ENCODE measurements at regions of chr7 and their contacts with region 1.

Region 1: GRCh38 chr7:12328888-12329770 is 74.5 kb downstream of the VWDE start:
- DNase-seq: no peak
- H3K4me3 ChIP-seq: no peak overlapping the region
- H3K27ac ChIP-seq: no peak overlapping the region
- H3K4me1 ChIP-seq: no peaks in the 10 kb centered on the region
- H3K27me3 ChIP-seq: no peaks in the 10 kb centered on the region
- CTCF ChIP-seq: no peak
- EP300 ChIP-seq: no peak
- POLR2A ChIP-seq: no peak

Region 2: DNA sequence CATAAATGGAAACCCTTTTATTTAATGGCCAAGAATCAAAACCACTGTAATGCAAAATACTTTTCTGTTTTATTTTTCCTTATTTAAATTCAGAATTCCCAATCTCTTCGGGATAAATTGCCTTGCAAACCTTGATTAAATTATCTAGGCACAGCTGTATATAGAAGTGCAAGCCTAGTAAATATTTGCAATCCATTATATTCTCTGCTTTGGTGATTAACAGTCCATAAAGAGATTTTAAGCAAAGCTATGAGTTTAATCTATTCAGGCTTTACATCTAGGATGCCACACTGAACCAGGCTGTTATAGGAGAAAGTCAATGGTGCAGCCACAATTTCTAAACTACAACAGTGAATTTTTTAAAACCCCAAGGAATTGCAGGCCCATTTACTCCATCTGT is 453.5 kb before region 1 on chr7:
- intact Hi-C with region 1: no loop called
- DNase-seq: no peak
- H3K4me3 ChIP-seq: no peak overlapping the region
- H3K27ac ChIP-seq: no peak overlapping the region
- H3K4me1 ChIP-seq: no peaks in the 10 kb centered on the region
- H3K27me3 ChIP-seq: no peaks in the 10 kb centered on the region
- CTCF ChIP-seq: no peak
- EP300 ChIP-seq: no peak
- POLR2A ChIP-seq: no peak

Region 3: GRCh38 chr7:12052211-12052610 is 276.9 kb before region 1 on chr7:
- intact Hi-C with region 1: no loop called
- DNase-seq: no peak
- H3K4me3 ChIP-seq: no peak overlapping the region
- H3K27ac ChIP-seq: no peak overlapping the region
- H3K4me1 ChIP-seq: no peaks in the 10 kb centered on the region
- H3K27me3 ChIP-seq: no peaks in the 10 kb centered on the region
- CTCF ChIP-seq: no peak
- EP300 ChIP-seq: no peak
- POLR2A ChIP-seq: no peak

Region 4: DNA sequence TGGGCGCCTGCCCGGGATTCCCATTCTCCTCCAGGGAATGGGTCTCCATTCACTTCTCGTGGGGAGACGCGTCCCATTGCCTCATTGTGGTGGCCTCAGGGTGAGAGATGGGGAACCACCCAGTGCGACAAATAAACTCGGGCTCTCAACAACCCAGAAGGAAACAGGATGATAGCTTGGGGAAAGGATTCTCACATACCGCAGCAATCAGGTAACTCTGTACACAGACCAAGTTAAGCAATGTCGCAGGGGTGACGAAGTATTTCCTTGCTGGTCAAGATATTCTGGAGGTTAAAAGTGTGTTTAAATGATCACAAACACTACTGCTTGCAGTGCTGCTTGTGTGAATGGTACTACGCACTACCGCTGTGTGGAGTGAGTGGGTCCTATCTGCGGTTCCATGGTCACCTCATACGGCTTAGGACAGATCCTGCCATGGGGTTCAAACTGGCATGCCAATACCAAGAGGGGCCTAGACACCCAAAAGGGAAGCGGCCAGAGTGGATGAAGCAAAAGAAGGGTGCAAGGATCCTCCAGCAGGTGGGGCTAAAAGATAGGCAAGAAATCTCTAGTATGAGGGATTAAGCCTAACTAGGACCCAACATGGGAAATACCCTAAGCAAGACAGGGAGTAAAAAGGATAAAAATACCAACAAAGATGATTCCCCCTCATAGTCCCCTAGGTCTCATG is 261.8 kb before region 1 on chr7:
- intact Hi-C with region 1: loop called (anchors 5 kb)
- DNase-seq: peak; percentile 59 to 78
- H3K4me3 ChIP-seq: no peak overlapping the region
- H3K27ac ChIP-seq: no peak overlapping the region
- H3K4me1 ChIP-seq: no peaks in the 10 kb centered on the region
- H3K27me3 ChIP-seq: no peaks in the 10 kb centered on the region
- CTCF ChIP-seq: peak in 5 of 7 experiments; percentile 41 to 72 (median 42)
- EP300 ChIP-seq: no peak
- POLR2A ChIP-seq: no peak

Region 5: GRCh38 chr7:12090757-12091221 is 238.3 kb before region 1 on chr7:
- intact Hi-C with region 1: no loop called
- DNase-seq: no peak
- H3K4me3 ChIP-seq: no peak overlapping the region
- H3K27ac ChIP-seq: no peak overlapping the region
- H3K4me1 ChIP-seq: no peaks in the 10 kb centered on the region
- H3K27me3 ChIP-seq: no peaks in the 10 kb centered on the region
- CTCF ChIP-seq: no peak
- EP300 ChIP-seq: no peak
- POLR2A ChIP-seq: no peak

Measured in stomach (tissue), 19 donors.